Right ventricle myocardium superior (tissue), 1 donor: ENCODE measurements at regions of chr7 and their contacts with region 1.

Region 1: GRCh38 chr7:51255536-51256208 is 60.9 kb downstream of the COBL start:
- DNase-seq: no peak
- ATAC-seq: peak; percentile 37

Region 2: GRCh38 chr7:51299391-51300133 is 43.9 kb after region 1 on chr7:
- intact Hi-C with region 1: loop called (anchors 5 kb)
- DNase-seq: no peak
- ATAC-seq: no peak

Region 3: GRCh38 chr7:51350200-51350921 is 94.7 kb after region 1 on chr7:
- intact Hi-C with region 1: loop called (anchors 10 kb)
- DNase-seq: no peak
- ATAC-seq: peak; percentile 88

Region 4: DNA sequence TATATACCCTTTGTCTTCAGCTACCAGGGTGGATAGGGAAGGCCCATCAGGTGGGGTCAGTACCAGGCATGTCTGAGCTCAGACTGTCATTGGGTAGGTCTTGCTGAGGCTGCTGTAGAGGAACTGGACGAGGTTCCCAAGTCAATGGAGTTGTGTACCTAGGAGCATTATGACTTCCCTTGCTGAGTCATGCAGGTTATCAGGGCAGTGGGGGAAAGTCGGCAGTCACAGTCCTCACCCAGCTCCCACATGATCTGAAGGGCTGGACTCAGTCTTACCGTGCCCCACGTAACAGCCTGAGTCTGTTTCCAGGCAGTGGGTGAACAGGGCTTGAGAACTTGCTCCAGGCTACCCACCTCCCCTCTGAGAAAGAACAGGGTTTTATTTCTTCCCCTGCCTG is 321.7 kb after region 1 on chr7:
- intact Hi-C with region 1: no loop called
- DNase-seq: no peak
- ATAC-seq: no peak